Naive thymus-derived CD4-positive, alpha-beta T cell (primary cell): ENCODE measurements at regions of chr4 and their contacts with region 1.

Region 1: DNA sequence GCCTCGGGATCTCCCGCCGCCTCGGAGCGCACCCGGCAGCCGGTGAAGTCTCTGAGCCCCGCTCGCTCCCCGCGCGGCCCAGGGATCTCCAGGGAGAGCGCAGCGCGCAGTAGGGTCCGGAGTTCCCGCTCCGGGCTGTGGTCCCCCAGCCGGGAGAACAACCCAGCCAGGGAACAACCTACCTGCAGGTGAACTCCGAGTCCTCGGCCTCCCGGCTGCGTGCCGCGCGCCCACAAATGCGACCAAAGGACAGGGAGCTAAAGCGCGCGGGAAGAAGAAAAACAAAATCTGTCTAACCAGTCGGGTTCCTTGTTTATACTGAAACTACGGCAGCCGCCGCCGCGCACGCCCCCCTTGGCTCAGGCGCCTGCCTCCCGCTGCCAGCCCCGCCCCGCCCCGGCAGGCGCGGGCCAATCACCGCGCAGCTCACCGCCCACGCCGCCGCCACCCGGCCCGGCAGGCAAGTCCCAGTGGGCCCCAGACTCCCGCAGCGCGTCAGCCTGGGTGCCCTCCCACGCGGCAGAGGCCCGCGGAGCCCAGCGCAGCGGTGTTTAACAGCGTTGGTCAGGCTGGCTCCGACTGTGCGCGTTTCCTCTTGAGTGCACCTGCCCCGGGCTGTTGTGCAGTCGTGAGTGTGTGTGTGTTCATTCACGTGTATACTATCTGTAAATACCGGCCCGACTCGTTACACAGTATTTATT is at the start of gene RASGEF1B:
- DNase-seq: peak; percentile 95 to 98 (median 97)
- ATAC-seq: peak; percentile 93
- H3K4me3 ChIP-seq: peak within 1 kb of the TSS; percentile 96
- H3K4me3 Mint-ChIP-seq: peak within 1 kb of the TSS; percentile 91 to 98 (median 95)
- H3K27ac ChIP-seq: peak within 1 kb of the TSS; percentile 96
- H3K27ac Mint-ChIP-seq: peak within 1 kb of the TSS; percentile 87 to 100 (median 98)
- H3K4me1 ChIP-seq: peaks cover 13 to 18% of the 10 kb centered on the region in 2 donors
- H3K4me1 Mint-ChIP-seq: peaks cover 31 to 52% (median 40%) of the 10 kb centered on the region in 7 donors
- H3K27me3 ChIP-seq: no peaks in the 10 kb centered on the region
- H3K27me3 Mint-ChIP-seq: peaks cover 0 to 14% (median 0%) of the 10 kb centered on the region in 5 donors
- total RNA-seq, gene RASGEF1B: 1.1 to 82.5 (median 11.5) TPM

Region 2: GRCh38 chr4:81494031-81494431 is 22.3 kb after region 1 on chr4:
- CTCF ChIA-PET with region 1: interaction called, 29 read pairs
- POLR2A ChIA-PET with region 1: interaction called, 59 read pairs
- intact Hi-C with region 1: loop called (anchors 1 kb)
- DNase-seq: peak in 4 of 9 donors; percentile 29 to 46 (median 38)
- ATAC-seq: peak; percentile 33
- H3K4me3 ChIP-seq: peak overlapping the region; percentile 47
- H3K4me3 Mint-ChIP-seq: peak overlapping the region; percentile 47 to 82 (median 76)
- H3K27ac ChIP-seq: peak overlapping the region; percentile 66
- H3K27ac Mint-ChIP-seq: peak overlapping the region; percentile 76 to 99 (median 94)
- H3K4me1 ChIP-seq: peaks cover 27 to 39% of the 10 kb centered on the region in 2 donors
- H3K4me1 Mint-ChIP-seq: peaks cover 27 to 62% (median 49%) of the 10 kb centered on the region in 7 donors
- H3K27me3 ChIP-seq: no peaks in the 10 kb centered on the region
- H3K27me3 Mint-ChIP-seq: peaks cover 0 to 8% (median 0%) of the 10 kb centered on the region in 5 donors

Region 3: DNA sequence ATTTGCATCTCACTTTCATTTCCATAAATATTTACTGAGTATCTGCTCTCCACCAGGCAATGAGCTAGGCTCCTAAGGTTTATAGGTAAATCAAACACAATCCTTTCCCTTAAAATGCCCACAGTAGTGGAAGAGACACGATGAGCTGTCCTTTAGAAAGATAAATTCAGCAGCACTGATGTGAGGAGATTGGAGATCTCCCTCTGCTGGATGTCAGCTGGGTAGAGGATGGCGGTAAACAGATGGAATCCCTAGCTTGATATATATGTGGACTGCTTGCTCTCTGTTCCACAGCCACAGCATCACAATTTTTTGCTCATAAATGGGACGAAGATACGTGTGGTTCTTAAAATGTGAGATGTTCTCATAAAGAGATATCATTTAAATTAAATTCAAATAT is 216.3 kb after region 1 on chr4:
- CTCF ChIA-PET with region 1: interaction called, 45 read pairs
- POLR2A ChIA-PET with region 1: interaction called, 4 read pairs
- intact Hi-C with region 1: loop called (anchors 1 to 5 kb)
- DNase-seq: peak in 4 of 9 donors; percentile 4 to 39 (median 20)
- ATAC-seq: peak; percentile 47
- H3K4me3 ChIP-seq: no peak overlapping the region
- H3K4me3 Mint-ChIP-seq: no peak overlapping the region
- H3K27ac ChIP-seq: no peak overlapping the region
- H3K27ac Mint-ChIP-seq: no peak overlapping the region
- H3K4me1 ChIP-seq: no peaks in the 10 kb centered on the region
- H3K4me1 Mint-ChIP-seq: peaks cover 0 to 2% (median 0%) of the 10 kb centered on the region in 7 donors
- H3K27me3 ChIP-seq: no peaks in the 10 kb centered on the region
- H3K27me3 Mint-ChIP-seq: peaks cover 0 to 7% (median 0%) of the 10 kb centered on the region in 5 donors

Region 4: DNA sequence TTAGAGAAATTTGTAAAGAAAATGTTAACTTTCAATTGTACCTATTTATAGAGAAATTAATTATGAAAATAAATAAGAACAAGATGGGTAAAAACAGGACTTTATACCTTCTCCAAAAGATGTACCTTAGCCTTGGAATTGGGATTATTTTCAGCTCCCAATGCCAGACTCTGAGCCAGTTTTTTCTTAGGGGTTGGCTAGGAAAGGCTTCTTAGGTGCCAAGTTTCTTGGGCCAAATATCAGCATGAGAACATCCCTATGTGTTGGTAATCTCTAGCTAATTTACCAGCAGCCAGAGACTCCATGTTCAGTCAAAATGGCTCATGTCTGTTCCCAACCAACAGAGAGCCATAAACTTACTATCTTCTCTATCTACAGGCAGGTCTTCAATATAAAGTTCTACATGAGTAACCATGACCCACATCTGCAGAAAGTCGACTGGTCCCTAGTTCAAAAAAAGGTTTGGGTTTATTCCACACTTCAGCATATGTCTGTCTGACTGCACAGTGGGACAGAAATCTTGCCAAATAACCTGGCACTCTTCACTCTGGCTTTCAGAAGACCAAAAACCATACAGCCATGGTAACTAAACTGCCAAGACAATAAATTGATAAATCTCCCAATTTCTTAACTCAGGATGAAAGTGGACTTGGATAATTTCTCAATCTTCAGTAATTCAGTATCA is 380.4 kb after region 1 on chr4:
- CTCF ChIA-PET with region 1: interaction called, 99 read pairs
- POLR2A ChIA-PET with region 1: interaction called, 3 read pairs
- intact Hi-C with region 1: no loop called
- DNase-seq: no peak
- ATAC-seq: no peak
- H3K4me3 ChIP-seq: no peak overlapping the region
- H3K4me3 Mint-ChIP-seq: no peak overlapping the region
- H3K27ac ChIP-seq: no peak overlapping the region
- H3K27ac Mint-ChIP-seq: no peak overlapping the region
- H3K4me1 ChIP-seq: no peaks in the 10 kb centered on the region
- H3K4me1 Mint-ChIP-seq: no peaks in the 10 kb centered on the region
- H3K27me3 ChIP-seq: no peaks in the 10 kb centered on the region
- H3K27me3 Mint-ChIP-seq: peaks cover 0 to 9% (median 6%) of the 10 kb centered on the region in 5 donors

Region 5: DNA sequence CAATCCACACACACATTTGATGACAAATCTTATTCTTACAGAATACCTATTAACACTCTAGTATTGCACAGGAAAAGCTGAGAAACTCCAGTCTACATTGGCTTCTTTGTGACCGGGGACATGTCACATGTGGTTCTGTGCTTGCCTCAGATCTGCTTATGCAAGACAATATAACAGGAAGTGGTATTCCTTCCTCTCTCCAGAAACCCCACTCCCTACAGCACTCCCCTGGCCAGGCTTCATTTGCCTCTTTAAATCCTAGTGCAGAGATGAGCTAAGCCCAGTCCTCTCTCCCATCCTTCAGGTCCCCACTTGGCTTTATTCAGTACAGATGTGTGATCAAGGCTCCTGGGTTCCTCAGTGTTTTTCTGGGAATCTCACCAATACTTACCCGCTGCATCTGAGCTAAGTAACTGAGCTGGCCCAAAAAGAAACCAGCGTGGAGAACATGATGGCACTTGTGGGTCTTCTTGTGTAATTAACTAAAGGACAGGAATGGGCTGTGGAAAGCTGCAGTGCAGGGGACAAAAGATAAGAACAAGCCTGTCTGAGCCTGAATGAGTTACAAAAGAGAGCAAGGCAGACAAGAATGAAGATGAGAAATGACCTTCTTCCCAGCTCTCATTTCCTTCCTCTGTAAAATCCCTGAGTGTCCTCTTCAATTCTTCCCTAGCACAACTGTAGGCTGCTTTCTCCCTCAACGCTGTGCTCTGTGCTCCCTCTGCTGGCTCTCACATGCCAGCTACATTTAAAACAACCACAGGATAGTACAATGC is 796.5 kb after region 1 on chr4:
- CTCF ChIA-PET with region 1: interaction called, 19 read pairs
- POLR2A ChIA-PET with region 1: no interaction called
- intact Hi-C with region 1: loop called (anchors 1 kb)
- DNase-seq: peak in 7 of 9 donors; percentile 25 to 60 (median 50)
- ATAC-seq: peak; percentile 97
- H3K4me3 ChIP-seq: no peak overlapping the region
- H3K4me3 Mint-ChIP-seq: peak overlapping the region in 8 of 10 donors; percentile 25 to 54 (median 36)
- H3K27ac ChIP-seq: no peak overlapping the region
- H3K27ac Mint-ChIP-seq: peak overlapping the region in 3 of 9 donors; percentile 25 to 79 (median 56)
- H3K4me1 ChIP-seq: peaks cover 0 to 8% of the 10 kb centered on the region in 2 donors
- H3K4me1 Mint-ChIP-seq: peaks cover 11 to 47% (median 28%) of the 10 kb centered on the region in 7 donors
- H3K27me3 ChIP-seq: no peaks in the 10 kb centered on the region
- H3K27me3 Mint-ChIP-seq: peaks cover 0 to 16% (median 0%) of the 10 kb centered on the region in 5 donors

Region 6: GRCh38 chr4:82890901-82891706 is 1419.4 kb after region 1 on chr4 and contains the start of gene SEC31A:
- CTCF ChIA-PET with region 1: no interaction called
- POLR2A ChIA-PET with region 1: no interaction called
- intact Hi-C with region 1: loop called in 1 of 2 experiments (anchors 5 kb)
- DNase-seq: peak; percentile 89 to 98 (median 95)
- ATAC-seq: peak; percentile 97
- H3K4me3 ChIP-seq: peak within 1 kb of the TSS; percentile 96
- H3K4me3 Mint-ChIP-seq: peak within 1 kb of the TSS; percentile 86 to 96 (median 93)
- H3K27ac ChIP-seq: peak within 1 kb of the TSS; percentile 99
- H3K27ac Mint-ChIP-seq: peak within 1 kb of the TSS; percentile 92 to 99 (median 97)
- H3K4me1 ChIP-seq: peaks cover 11 to 12% of the 10 kb centered on the region in 2 donors
- H3K4me1 Mint-ChIP-seq: peaks cover 18 to 51% (median 41%) of the 10 kb centered on the region in 7 donors
- H3K27me3 ChIP-seq: no peaks in the 10 kb centered on the region
- H3K27me3 Mint-ChIP-seq: no peaks in the 10 kb centered on the region
- total RNA-seq, gene SEC31A: 137 to 168 (median 149) TPM